GM10248 (cell line): ENCODE measurements at regions of chr19 and their contacts with region 1.

Region 1: DNA sequence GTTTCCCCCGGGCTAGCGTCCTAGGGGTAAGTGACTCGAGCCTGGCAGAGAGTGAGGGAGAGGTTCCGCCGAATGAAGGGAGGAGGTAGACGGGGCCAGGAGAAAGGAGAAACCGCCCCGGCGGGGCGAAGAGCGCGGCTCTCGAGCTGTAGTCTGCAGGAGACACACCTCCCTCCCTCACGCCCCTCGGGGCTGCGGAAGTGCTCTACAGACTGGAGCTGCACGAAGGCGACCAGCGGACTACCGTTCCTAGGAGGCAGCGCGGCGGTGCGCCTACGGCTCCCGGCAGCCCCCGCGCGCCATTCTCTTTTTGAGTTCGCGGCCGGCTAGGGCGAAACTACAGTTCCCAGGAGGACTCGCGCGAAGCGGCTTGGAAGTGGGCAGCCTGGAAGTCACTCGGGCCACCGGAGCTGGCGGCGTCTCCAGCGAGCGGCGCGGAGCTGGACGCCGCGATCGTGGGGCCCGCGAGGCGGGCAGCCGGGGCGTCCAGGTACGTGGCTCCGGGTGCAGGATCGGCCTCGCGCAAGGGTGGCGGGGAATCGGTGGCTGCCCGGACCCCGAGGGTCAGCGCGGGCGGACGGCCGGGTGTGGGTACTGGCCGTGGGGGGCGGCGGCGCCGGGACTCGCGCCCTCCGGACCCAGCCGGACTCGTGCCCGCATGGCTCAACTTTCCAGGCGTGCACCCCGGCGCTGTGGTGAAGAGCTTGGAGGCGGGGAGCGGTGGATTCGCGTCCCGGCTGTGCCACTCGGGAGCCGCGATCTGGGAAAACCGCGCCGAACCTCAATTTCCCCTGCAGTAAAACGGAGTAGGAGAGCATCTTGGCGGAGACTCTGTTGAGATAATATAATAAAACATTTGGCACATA is at the start of gene SIPA1L3:
- DNase-seq: peak; percentile 92
- CTCF ChIP-seq: no peak

Region 2: DNA sequence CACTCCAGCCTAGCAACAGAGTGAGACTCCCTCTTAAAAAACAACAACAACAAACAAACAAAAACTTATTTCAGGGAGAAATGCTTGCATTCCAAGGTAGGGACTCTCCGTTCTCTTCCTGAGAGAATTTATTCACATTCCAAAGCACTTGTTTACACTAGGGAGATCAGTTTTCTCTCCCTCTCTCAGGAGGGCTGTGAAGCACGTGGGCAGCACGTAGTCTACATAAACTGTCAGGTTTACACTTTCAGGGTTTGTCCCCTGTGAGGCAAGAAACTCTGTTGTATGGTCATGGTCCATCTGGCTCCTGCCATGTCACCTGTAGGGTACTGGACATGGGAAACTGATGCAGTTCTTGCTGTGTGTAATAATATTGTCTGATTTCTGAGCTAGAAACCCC is 32.3 kb before region 1 on chr19:
- CTCF ChIA-PET with region 1: no interaction called
- POLR2A ChIA-PET with region 1: no interaction called
- DNase-seq: no peak
- CTCF ChIP-seq: no peak

Region 3: GRCh38 chr19:37920591-37921450 is 13.7 kb after region 1 on chr19:
- CTCF ChIA-PET with region 1: interaction called, 13 read pairs
- POLR2A ChIA-PET with region 1: no interaction called
- DNase-seq: no peak
- CTCF ChIP-seq: no peak

Region 4: GRCh38 chr19:38004521-38005223 is 97.6 kb after region 1 on chr19:
- CTCF ChIA-PET with region 1: interaction called, 8 read pairs
- POLR2A ChIA-PET with region 1: interaction called, 10 read pairs
- DNase-seq: peak; percentile 81
- CTCF ChIP-seq: no peak

Region 5: DNA sequence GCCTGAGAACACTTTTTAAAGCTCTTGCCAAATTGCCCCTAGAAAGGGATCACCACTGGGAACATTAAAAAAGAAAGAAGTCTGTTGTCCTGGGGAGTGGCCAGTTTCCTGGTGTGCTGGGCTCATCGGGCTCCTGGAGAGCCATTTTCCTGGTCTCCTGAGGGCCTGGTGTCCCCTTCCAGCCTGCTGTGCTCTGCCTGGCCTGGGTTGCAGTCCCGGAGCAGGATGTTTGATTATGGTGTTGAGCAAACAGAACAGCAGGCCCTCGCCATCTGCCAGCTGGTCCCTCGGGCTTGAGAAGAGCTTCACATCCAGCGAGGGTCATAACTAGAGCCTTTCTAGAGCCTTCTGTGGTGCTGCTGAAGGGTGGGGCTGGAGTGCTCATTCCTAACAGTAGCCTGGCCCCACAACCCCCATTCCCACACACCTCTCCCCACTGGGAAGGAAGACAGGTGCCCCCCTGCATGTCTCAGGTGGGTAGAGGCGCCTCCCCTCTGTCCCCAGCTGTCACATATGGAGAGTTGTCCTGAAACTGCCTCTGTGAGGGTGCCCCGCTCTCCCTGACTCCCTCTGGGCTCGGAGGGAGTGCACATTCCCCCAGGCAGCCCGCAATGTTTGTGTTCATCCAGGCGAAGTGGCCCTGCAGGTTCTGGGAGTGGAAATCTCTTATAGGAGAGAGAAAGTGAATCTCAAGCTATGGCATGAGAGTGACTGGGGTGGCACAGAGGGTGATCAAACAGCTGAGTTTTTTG is 151.0 kb after region 1 on chr19:
- CTCF ChIA-PET with region 1: interaction called, 19 read pairs
- POLR2A ChIA-PET with region 1: no interaction called
- DNase-seq: no peak
- CTCF ChIP-seq: no peak

Region 6: GRCh38 chr19:38224014-38224862 is 317.1 kb after region 1 on chr19 and contains the start of gene DPF1:
- CTCF ChIA-PET with region 1: interaction called, 18 read pairs
- POLR2A ChIA-PET with region 1: no interaction called
- DNase-seq: peak; percentile 95
- CTCF ChIP-seq: peak; percentile 35

Region 7: DNA sequence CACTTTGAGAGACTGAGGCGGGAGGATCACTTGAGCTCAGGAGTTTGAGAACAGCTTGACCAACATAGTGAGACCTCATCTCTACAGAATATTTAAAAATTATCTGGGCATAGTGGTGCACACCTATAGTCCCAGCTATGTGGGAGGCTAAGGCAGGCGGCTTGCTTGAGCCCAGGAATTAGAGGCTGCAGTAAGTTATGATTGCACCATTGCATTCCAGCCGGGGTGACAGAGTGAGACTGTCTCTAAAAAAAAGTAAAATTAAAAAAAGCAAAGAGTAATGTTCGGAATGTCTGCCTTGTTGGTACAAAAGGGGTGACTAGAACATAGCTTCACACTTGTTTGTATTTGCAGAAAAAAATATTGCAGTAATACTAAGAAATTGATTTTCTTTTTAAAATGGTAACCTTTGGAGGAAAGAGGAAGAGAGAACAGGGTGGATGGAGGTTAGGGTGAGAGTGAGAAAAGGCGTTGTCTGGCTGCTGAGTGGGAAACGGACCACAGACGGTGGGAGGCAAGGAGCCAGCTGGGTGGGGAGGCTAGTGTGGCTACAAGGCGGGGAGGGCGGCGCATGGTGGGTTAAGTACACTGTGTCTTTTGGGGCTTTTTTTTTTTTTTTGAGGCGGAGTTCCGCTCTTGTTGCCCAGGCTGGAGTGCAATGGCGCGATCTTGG is 338.9 kb after region 1 on chr19:
- CTCF ChIA-PET with region 1: interaction called, 10 read pairs
- POLR2A ChIA-PET with region 1: no interaction called
- DNase-seq: no peak
- CTCF ChIP-seq: no peak

Region 8: GRCh38 chr19:38374429-38375176 is 467.5 kb after region 1 on chr19 and contains the start of gene PSMD8:
- CTCF ChIA-PET with region 1: interaction called, 11 read pairs
- POLR2A ChIA-PET with region 1: no interaction called
- DNase-seq: peak; percentile 99
- CTCF ChIP-seq: peak; percentile 34